Naive thymus-derived CD4-positive, alpha-beta T cell (primary cell): ENCODE measurements at regions of chr16 and their contacts with region 1.

Region 1: GRCh38 chr16:19067349-19068236 is at the start of gene COQ7:
- DNase-seq: peak; percentile 95 to 100 (median 99)
- ATAC-seq: peak; percentile 92
- H3K4me3 ChIP-seq: peak within 1 kb of the TSS; percentile 73
- H3K4me3 Mint-ChIP-seq: peak within 1 kb of the TSS; percentile 86 to 97 (median 95)
- H3K27ac ChIP-seq: peak within 1 kb of the TSS; percentile 100
- H3K27ac Mint-ChIP-seq: peak within 1 kb of the TSS; percentile 88 to 100 (median 98)
- H3K4me1 ChIP-seq: peaks cover 5 to 10% of the 10 kb centered on the region in 2 donors
- H3K4me1 Mint-ChIP-seq: peaks cover 0 to 24% (median 15%) of the 10 kb centered on the region in 7 donors
- H3K27me3 ChIP-seq: no peaks in the 10 kb centered on the region
- H3K27me3 Mint-ChIP-seq: peaks cover 0 to 5% (median 0%) of the 10 kb centered on the region in 5 donors
- total RNA-seq, gene COQ7: 16.7 to 20.4 (median 17.5) TPM

Region 2: GRCh38 chr16:18789850-18790724 is 277.5 kb before region 1 on chr16 and contains the start of gene RPS15A:
- CTCF ChIA-PET with region 1: no interaction called
- POLR2A ChIA-PET with region 1: interaction called, 3 read pairs
- intact Hi-C with region 1: loop called (anchors 1 kb)
- DNase-seq: peak; percentile 72 to 97 (median 91)
- ATAC-seq: peak; percentile 98
- H3K4me3 ChIP-seq: peak within 1 kb of the TSS; percentile 98
- H3K4me3 Mint-ChIP-seq: peak within 1 kb of the TSS; percentile 92 to 99 (median 96)
- H3K27ac ChIP-seq: peak within 1 kb of the TSS; percentile 91
- H3K27ac Mint-ChIP-seq: peak within 1 kb of the TSS; percentile 89 to 96 (median 94)
- H3K4me1 ChIP-seq: peaks cover 22 to 43% of the 10 kb centered on the region in 2 donors
- H3K4me1 Mint-ChIP-seq: peaks cover 35 to 63% (median 50%) of the 10 kb centered on the region in 7 donors
- H3K27me3 ChIP-seq: no peaks in the 10 kb centered on the region
- H3K27me3 Mint-ChIP-seq: peaks cover 0 to 2% (median 0%) of the 10 kb centered on the region in 5 donors
- total RNA-seq, gene RPS15A: 2,060 to 3,897 (median 3,815) TPM

Region 3: GRCh38 chr16:18969050-18969854 is 98.3 kb before region 1 on chr16:
- CTCF ChIA-PET with region 1: no interaction called
- POLR2A ChIA-PET with region 1: no interaction called
- intact Hi-C with region 1: loop called in 1 of 2 experiments (anchors 1 kb)
- DNase-seq: peak; percentile 42 to 82 (median 62)
- ATAC-seq: peak; percentile 93
- H3K4me3 ChIP-seq: peak overlapping the region; percentile 8
- H3K4me3 Mint-ChIP-seq: peak overlapping the region in 8 of 10 donors; percentile 17 to 58 (median 46)
- H3K27ac ChIP-seq: no peak overlapping the region
- H3K27ac Mint-ChIP-seq: no peak overlapping the region
- H3K4me1 ChIP-seq: no peaks in the 10 kb centered on the region
- H3K4me1 Mint-ChIP-seq: peaks cover 4 to 9% (median 7%) of the 10 kb centered on the region in 7 donors
- H3K27me3 ChIP-seq: no peaks in the 10 kb centered on the region
- H3K27me3 Mint-ChIP-seq: peaks cover 0 to 2% (median 0%) of the 10 kb centered on the region in 5 donors

Region 4: DNA sequence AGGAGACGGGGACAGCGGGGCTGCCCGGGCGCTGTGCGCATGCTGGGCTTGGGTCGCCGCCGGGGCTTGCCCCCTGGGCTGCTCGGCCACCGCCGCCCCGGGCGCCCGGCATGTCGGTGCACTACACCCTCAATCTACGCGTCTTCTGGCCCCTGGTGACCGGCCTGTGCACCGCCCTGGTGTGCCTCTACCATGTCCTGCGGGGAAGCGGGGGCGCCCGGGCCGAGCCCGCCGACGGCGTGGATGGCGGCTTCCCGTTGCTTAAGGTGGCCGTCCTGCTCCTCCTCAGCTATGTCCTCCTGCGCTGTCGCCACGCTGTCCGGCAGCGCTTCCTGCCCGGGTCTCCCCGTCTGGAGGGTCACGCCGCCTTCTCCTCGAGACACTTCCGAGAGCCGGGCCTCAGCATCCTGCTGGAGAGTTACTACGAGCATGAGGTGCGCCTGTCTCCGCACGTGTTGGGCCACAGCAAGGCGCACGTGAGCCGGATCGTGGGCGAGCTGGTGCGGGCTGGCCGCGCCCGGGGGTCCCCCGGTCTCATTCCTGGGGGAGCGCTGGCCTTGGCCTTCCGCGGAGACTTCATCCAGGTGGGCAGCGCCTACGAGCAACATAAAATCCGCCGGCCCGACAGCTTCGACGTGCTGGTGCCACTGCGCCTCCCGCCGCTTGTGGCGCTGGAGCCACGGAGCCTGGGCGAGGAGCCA is 46.9 kb after region 1 on chr16:
- CTCF ChIA-PET with region 1: no interaction called
- POLR2A ChIA-PET with region 1: no interaction called
- intact Hi-C with region 1: loop called in 1 of 2 experiments (anchors 1 kb)
- DNase-seq: peak in 1 of 9 donors; percentile 49
- ATAC-seq: peak; percentile 36
- H3K4me3 ChIP-seq: no peak overlapping the region
- H3K4me3 Mint-ChIP-seq: peak overlapping the region in 2 of 10 donors; percentile 68 to 82
- H3K27ac ChIP-seq: no peak overlapping the region
- H3K27ac Mint-ChIP-seq: peak overlapping the region in 1 of 9 donors; percentile 78
- H3K4me1 ChIP-seq: peaks cover 0 to 8% of the 10 kb centered on the region in 2 donors
- H3K4me1 Mint-ChIP-seq: peaks cover 0 to 36% (median 5%) of the 10 kb centered on the region in 7 donors
- H3K27me3 ChIP-seq: no peaks in the 10 kb centered on the region
- H3K27me3 Mint-ChIP-seq: peaks cover 18 to 49% (median 28%) of the 10 kb centered on the region in 5 donors

Region 5: DNA sequence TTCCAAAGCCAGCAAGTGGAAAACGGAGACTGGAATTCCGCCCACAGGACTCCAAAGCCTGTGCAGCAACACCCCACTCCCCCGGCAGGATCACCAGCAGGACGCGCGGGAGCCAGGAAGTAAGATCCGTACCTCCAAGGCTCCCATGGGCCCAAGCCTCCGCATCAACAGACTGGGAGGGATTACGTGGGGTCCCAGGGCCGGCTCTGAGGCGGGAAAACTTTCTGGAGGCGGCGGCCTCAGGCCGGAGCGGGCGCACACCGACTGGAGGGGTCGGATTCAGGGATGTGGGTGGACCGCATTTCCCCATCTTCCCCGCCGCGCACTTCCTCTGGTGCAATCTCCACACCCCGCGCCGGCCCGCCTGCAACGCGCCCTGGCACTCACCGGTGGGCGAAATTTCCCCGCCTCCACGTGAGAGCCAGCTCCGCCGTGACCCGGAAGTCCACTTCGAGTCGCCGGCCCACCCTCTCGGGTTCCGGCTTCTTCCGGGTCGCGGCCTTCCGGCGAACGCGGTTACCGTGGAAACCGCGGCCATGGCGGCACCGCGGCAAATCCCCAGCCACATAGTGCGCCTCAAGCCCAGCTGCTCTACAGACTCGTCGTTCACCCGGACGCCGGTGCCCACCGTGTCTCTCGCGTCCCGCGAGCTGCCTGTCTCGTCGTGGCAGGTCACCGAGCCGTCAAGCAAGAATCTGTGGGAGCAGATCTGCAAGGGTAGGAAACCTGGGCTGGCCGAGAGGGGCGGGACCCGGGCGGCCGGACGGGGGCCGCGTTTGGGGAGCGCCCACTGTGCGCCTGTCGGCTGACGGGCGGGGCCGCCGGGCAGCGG is 650.4 kb after region 1 on chr16 and contains the starts of genes IQCK and KNOP1:
- CTCF ChIA-PET with region 1: no interaction called
- POLR2A ChIA-PET with region 1: no interaction called
- intact Hi-C with region 1: loop called in 1 of 2 experiments (anchors 2 kb)
- DNase-seq: peak; percentile 79 to 92 (median 87)
- ATAC-seq: peak; percentile 97
- H3K4me3 ChIP-seq: peak within 1 kb of the TSS; percentile 90
- H3K4me3 Mint-ChIP-seq: peak within 1 kb of the TSS; percentile 90 to 97 (median 95)
- H3K27ac ChIP-seq: peak within 1 kb of the TSS; percentile 77
- H3K27ac Mint-ChIP-seq: peak within 1 kb of the TSS; percentile 63 to 89 (median 83)
- H3K4me1 ChIP-seq: peaks cover 0 to 7% of the 10 kb centered on the region in 2 donors
- H3K4me1 Mint-ChIP-seq: peaks cover 16 to 62% (median 48%) of the 10 kb centered on the region in 7 donors
- H3K27me3 ChIP-seq: no peaks in the 10 kb centered on the region
- H3K27me3 Mint-ChIP-seq: no peaks in the 10 kb centered on the region
- total RNA-seq, gene IQCK: 0.48 to 4.1 (median 2.6) TPM
- total RNA-seq, gene KNOP1: 6.4 to 20.6 (median 18.5) TPM